ENCODE measurements at regions of chr1 and their contacts with region 1.

Region 1: DNA sequence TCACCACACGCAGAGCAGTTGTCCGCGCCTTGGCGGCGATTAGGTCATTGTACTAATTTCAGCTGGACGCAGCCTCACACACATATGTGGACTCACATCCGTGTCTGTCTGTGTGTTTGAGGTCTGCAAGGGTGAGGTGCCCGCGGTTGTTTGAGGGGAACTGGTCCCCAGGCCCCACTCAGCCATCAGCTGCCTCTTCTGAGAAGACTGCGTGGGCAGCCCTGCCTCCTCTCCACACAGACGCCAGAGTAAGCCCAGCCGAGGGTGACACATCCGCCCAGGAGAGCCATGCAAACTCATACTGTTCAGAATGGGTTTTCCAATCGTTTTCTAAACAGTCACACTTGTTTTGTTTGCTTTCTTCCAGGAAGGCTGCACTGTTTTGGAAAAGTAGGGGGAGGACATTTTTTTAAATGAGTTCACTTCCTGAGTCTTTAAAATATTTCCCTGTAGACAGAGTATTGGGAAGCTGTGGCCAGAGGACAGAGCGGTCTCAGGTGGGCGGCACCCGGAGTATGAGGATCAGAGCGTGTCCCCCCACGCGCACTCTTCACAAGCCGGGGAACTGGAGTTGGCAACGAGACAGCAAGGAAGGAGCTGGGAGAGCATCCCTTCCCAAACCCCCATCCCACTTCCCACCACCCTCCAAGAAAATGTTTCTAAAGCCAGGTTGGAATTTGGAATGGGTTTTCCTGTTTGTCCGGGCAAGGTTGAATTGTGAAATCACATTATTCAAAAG is 53.3 kb downstream of the TOMM20 start:
- DNase-seq: peak; percentile 86
- H3K4me3 ChIP-seq: no peak overlapping the region
- H3K27ac ChIP-seq: peak overlapping the region; percentile 78
- H3K4me1 ChIP-seq: peaks cover 54% of the 10 kb centered on the region
- H3K27me3 ChIP-seq: no peaks in the 10 kb centered on the region
- CTCF ChIP-seq: no peak

Region 2: DNA sequence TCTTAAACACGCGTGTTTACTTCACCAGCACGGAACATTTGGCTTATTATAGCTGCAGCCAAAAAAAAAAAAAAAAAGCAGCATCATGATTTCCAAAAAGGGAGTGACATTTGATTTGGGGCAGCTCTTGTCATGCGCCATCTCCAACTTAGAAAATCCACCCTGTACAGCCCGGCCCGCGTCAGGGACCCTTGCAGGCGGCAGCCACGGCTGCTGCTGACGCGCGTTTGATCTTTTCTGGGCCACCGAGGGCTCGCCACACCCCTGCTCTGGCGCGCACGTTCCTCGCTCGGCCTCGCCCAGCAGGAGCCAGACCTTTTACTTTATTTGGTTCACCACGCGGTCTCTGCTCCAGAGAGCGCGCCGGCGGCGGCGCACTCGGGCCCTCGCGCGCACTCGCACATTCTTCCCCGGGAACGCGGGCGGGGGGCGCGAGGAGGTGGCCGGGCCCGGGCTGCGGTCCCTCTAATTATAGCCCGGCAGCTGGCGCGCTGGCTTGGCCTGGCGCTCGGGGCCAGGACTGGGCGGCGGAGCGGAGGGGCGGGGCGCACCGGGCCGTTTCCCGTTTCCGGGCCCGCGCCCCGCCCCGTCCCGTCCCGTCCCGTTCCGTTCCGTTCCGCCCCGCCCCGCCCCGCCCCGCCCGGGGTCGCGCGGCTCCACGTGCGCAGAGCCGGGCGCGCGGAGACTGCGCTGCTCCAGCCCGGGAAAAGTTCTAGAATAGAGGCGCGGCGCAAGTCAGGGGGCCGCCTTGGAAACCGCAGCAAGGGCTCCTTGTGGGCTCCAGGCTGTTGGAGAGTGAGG is 475.5 kb before region 1 on chr1:
- CTCF ChIA-PET with region 1: no interaction called
- dilution Hi-C with region 1: no loop called
- in situ Hi-C with region 1: loop called in 1 of 2 experiments (anchors 10 kb)
- intact Hi-C with region 1: no loop called
- DNase-seq: peak; percentile 87
- H3K4me3 ChIP-seq: peak overlapping the region; percentile 53 to 60 (median 55)
- H3K27ac ChIP-seq: peak overlapping the region; percentile 88
- H3K4me1 ChIP-seq: peaks cover 42% of the 10 kb centered on the region
- H3K27me3 ChIP-seq: no peaks in the 10 kb centered on the region
- CTCF ChIP-seq: no peak

Region 3: GRCh38 chr1:234699795-234700665 is 375.3 kb before region 1 on chr1:
- CTCF ChIA-PET with region 1: no interaction called
- dilution Hi-C with region 1: loop called (anchors 10 kb)
- in situ Hi-C with region 1: no loop called
- intact Hi-C with region 1: no loop called
- DNase-seq: peak; percentile 82
- H3K4me3 ChIP-seq: no peak overlapping the region
- H3K27ac ChIP-seq: no peak overlapping the region
- H3K4me1 ChIP-seq: peaks cover 12% of the 10 kb centered on the region
- H3K27me3 ChIP-seq: no peaks in the 10 kb centered on the region
- CTCF ChIP-seq: no peak

Region 4: DNA sequence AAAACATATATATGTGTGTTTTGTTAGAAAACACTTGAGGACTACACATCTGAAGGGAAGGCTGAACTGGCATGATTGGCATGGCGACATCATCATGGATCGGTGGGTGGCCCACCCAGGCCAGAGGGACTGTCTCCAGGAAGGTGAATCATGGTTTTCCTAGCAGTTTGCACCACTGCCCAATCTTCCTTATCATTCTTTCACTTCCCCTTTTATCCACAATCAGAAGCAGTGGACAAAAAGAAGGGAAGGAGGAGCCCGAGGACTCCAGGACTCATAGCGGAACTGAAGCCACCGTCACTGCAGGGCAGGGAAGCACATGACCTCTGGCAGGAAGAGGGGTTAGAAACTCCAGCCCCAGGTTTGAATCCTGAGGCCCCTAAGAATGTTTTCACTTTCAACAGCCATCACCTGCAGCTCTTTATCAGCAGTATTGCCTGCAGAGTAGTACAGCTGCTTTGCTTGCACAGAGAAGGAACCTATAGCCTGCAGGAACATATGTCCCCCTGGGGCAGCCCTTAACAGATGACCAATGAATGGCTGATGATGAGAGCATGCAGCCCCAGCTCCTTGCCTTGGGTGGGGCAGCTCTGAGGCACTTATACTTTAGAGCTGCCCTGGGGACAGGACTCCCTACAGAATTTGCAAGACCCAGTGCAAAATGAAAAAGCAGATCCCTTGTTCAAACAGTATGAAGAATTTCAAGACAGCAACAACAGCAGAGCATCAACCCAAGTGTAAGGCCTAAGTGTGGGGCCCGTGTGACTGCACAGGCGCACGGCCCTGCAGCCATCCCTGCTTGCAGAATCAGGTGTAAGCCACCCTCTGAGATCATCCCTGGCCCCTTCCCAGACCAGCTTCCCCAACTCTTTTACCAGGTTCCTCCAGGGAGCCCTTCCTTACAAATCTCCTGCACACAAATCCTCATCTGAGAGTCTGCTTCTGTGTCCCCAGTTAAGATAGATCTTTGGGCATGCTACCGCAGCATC is 223.6 kb before region 1 on chr1:
- CTCF ChIA-PET with region 1: no interaction called
- dilution Hi-C with region 1: loop called (anchors 10 kb)
- in situ Hi-C with region 1: no loop called
- intact Hi-C with region 1: no loop called
- DNase-seq: no peak
- H3K4me3 ChIP-seq: no peak overlapping the region
- H3K27ac ChIP-seq: no peak overlapping the region
- H3K4me1 ChIP-seq: peaks cover 25% of the 10 kb centered on the region
- H3K27me3 ChIP-seq: no peaks in the 10 kb centered on the region
- CTCF ChIP-seq: no peak

Region 5: GRCh38 chr1:234925440-234926263 is 149.7 kb before region 1 on chr1:
- CTCF ChIA-PET with region 1: no interaction called
- dilution Hi-C with region 1: no loop called
- in situ Hi-C with region 1: no loop called
- intact Hi-C with region 1: loop called (anchors 2 kb)
- DNase-seq: peak; percentile 99
- H3K4me3 ChIP-seq: no peak overlapping the region
- H3K27ac ChIP-seq: peak overlapping the region; percentile 60
- H3K4me1 ChIP-seq: peaks cover 16% of the 10 kb centered on the region
- H3K27me3 ChIP-seq: no peaks in the 10 kb centered on the region
- CTCF ChIP-seq: no peak

Region 6: GRCh38 chr1:234997201-234997895 is 78.0 kb before region 1 on chr1:
- CTCF ChIA-PET with region 1: no interaction called
- dilution Hi-C with region 1: no loop called
- in situ Hi-C with region 1: loop called in 1 of 2 experiments (anchors 5 kb)
- intact Hi-C with region 1: loop called (anchors 1 kb)
- DNase-seq: peak; percentile 100
- H3K4me3 ChIP-seq: peak overlapping the region in 1 of 3 experiments; percentile 8
- H3K27ac ChIP-seq: peak overlapping the region; percentile 98
- H3K4me1 ChIP-seq: peaks cover 27% of the 10 kb centered on the region
- H3K27me3 ChIP-seq: no peaks in the 10 kb centered on the region
- CTCF ChIP-seq: peak in 1 of 2 donors; percentile 7

Measured in mammary epithelial cell (primary cell).